Dorsolateral prefrontal cortex (tissue), 120 donors: ENCODE measurements at regions of chr2 and their contacts with region 1.

Region 1: DNA sequence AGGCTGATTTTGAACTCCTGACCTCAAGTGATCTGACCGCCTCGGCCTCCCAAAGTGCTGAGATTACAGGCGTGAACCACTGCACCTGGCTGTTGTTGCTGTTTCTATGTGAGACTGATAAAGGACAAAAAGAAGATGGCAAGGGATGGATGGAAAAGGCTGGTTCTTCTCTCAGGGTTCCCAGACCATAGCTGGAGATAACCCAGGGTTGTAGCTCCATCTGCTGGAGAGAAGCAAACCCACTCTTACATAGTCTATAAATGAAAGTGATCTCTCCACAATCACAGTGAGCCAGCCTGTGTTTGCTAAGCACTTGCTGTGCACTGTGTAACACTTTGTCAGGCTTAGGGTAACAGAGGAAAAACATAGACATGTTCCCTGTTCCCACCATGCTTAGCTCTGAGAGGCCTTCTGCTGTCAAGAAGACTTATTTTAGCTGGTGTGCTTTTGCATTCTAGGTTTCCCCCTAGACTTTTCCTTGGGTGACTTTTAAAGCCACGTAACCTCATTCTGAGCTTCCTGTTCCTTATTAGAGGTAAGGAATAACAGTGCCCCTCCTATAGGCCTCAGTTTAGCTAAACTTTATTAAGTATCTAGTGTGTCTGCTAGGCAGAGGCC is 49.7 kb downstream of the LIMS1 start:
- DNase-seq: peak in 6 of 10 donors; percentile 21 to 86 (median 58)
- H3K4me3 ChIP-seq: peak overlapping the region in 1 of 59 donors; percentile 26
- H3K27ac ChIP-seq: peak overlapping the region in 6 of 59 donors; percentile 6 to 52 (median 16)
- H3K27me3 ChIP-seq: no peaks in the 10 kb centered on the region
- CTCF ChIP-seq: peak; percentile 65 to 94 (median 84)

Region 2: DNA sequence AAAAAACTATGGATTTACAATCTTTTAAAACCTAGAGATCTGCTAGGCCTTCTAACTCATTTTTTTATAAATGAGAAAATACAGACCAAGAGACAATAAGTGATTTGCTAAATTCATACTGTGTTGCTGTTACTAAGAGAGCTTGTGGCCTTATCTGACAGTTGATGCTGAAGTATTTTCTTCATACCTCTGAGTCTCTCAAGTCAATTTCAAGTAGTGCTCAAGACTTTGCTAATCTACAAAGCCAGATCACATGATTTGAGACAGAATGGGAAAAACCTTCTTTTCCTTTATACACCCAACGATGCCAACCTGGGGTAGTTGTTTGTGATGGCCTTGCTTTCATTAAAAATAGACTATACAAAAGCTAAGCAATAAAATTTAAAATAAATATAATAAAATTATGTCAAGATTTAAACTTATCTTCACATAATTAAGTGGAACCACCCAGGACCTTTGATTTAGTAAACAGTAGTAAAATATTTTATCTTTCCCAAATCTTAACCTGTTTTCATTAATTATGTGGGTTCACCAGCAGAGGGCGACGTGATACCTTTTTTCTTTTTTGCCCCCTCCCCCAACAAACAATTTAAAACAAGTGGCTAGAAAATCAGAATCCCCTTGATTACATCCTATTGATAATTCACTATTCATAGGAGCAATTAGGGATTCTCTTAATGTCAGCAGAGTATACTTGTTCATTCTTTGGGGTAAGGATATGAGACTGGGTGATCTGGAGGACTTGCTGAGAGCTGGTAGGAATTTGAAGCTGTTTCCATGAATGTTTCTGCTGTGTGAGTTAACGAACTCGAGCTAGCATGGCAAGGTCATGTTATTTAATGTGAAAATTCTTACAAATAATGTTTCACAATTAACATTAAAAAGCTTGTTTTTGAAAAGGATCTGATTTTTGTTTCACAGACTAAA is 647.3 kb before region 1 on chr2:
- intact Hi-C with region 1: loop called in 1 of 2 experiments (anchors 10 kb)
- DNase-seq: no peak
- H3K4me3 ChIP-seq: no peak overlapping the region
- H3K27ac ChIP-seq: no peak overlapping the region
- H3K27me3 ChIP-seq: no peaks in the 10 kb centered on the region
- CTCF ChIP-seq: peak; percentile 53 to 85 (median 71)

Region 3: GRCh38 chr2:108351889-108352288 is 232.1 kb before region 1 on chr2:
- intact Hi-C with region 1: loop called (anchors 1 to 5 kb)
- DNase-seq: no peak
- H3K4me3 ChIP-seq: no peak overlapping the region
- H3K27ac ChIP-seq: no peak overlapping the region
- H3K27me3 ChIP-seq: peaks cover 0 to 4% (median 0%) of the 10 kb centered on the region in 45 donors
- CTCF ChIP-seq: no peak

Region 4: DNA sequence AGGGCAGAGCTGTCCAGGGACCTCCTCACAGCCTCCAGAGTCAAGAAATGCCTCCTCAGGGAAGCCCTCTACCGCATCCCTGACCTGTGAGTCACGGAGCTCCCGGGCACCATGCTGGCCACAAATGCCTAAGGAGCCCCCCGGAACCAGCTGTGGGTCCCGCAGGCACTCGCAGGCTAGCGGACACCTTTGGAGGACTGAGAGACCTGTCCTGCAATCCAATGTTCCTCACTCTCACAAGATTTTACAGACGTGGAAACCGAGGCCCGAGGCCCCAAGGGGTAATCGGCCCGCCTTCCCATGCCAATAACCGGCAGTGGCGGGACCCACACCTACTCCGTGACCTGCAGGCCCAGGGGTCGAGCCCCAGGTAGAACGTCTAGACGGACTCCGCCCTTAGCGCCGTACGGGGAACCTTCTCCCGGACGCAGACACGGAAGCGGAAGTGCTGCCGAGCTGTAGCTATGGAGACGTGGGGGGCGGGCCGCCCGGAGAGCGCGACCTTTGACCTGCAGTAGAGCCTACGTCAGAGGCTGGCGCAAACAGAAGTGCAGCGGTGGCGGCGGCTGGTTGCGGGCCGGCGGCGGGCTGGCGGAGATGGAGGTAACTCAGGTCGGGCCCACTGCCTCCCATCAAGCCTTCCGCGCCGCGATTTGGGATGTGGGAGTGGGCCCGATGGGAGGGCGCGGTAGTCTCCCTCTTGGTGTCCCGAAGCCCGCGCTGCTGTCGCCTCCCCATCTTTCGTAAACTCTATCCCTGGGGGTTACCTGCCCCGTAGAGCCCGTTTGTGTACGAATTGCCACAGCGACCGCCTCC is 135.1 kb before region 1 on chr2 and contains the start of gene GCC2:
- intact Hi-C with region 1: loop called (anchors 10 kb)
- DNase-seq: peak; percentile 83 to 97 (median 96)
- H3K4me3 ChIP-seq: peak within 1 kb of the TSS; percentile 61 to 99 (median 93)
- H3K27ac ChIP-seq: peak within 1 kb of the TSS; percentile 31 to 95 (median 84)
- H3K27me3 ChIP-seq: no peaks in the 10 kb centered on the region
- CTCF ChIP-seq: peak in 13 of 56 donors; percentile 7 to 54 (median 20)
- total RNA-seq, gene GCC2: 60.6 to 126 (median 96.4) TPM

Region 5: GRCh38 chr2:108533832-108534583 is 50.0 kb before region 1 on chr2 and contains the start of gene LIMS1:
- intact Hi-C with region 1: loop called in 1 of 2 experiments (anchors 5 kb)
- DNase-seq: peak; percentile 72 to 90 (median 82)
- H3K4me3 ChIP-seq: peak within 1 kb of the TSS; percentile 49 to 99 (median 85)
- H3K27ac ChIP-seq: peak within 1 kb of the TSS; percentile 49 to 97 (median 87)
- H3K27me3 ChIP-seq: no peaks in the 10 kb centered on the region
- CTCF ChIP-seq: peak in 25 of 56 donors; percentile 3 to 43 (median 19)
- total RNA-seq, gene LIMS1: 11.9 to 38.1 (median 21.9) TPM